ENCODE measurements at regions of chr16 and their contacts with region 1.

Region 1: GRCh38 chr16:48687421-48688038 is 77.5 kb upstream of the N4BP1 start:
- DNase-seq: peak in 1 of 2 donors; percentile 52
- ATAC-seq: peak; percentile 57
- H3K4me3 ChIP-seq: no peak overlapping the region
- H3K27ac ChIP-seq: no peak overlapping the region
- H3K4me1 ChIP-seq: no peaks in the 10 kb centered on the region
- H3K27me3 ChIP-seq: no peaks in the 10 kb centered on the region

Region 2: GRCh38 chr16:48583075-48584065 is 104.2 kb before region 1 on chr16:
- intact Hi-C with region 1: no loop called
- DNase-seq: no peak
- ATAC-seq: no peak
- H3K4me3 ChIP-seq: no peak overlapping the region
- H3K27ac ChIP-seq: no peak overlapping the region
- H3K4me1 ChIP-seq: peaks cover 0 to 2% of the 10 kb centered on the region in 2 donors
- H3K27me3 ChIP-seq: no peaks in the 10 kb centered on the region

Region 3: DNA sequence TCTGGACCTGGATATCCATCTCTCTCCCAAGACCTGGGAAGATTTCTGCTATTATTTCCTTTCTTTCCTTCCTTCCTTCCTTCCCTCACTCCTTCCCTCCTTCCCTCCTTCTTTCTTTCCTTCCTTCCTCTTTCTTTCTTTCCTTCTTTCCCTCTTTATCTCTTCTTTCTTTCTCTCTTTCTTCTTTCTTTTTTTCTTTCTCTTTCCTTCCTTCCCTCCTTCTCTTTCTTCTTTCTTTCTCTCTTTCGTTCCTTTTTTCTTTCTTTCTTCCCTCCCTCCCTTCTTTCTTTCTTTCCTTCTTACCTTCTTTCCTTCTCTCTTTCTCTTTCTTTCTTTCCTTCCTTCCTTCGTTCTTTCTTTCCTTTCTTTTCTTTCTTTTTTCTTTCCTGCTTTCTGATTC is 39.7 kb before region 1 on chr16:
- intact Hi-C with region 1: no loop called
- DNase-seq: no peak
- ATAC-seq: no peak
- H3K4me3 ChIP-seq: no peak overlapping the region
- H3K27ac ChIP-seq: no peak overlapping the region
- H3K4me1 ChIP-seq: no peaks in the 10 kb centered on the region
- H3K27me3 ChIP-seq: no peaks in the 10 kb centered on the region

Region 4: DNA sequence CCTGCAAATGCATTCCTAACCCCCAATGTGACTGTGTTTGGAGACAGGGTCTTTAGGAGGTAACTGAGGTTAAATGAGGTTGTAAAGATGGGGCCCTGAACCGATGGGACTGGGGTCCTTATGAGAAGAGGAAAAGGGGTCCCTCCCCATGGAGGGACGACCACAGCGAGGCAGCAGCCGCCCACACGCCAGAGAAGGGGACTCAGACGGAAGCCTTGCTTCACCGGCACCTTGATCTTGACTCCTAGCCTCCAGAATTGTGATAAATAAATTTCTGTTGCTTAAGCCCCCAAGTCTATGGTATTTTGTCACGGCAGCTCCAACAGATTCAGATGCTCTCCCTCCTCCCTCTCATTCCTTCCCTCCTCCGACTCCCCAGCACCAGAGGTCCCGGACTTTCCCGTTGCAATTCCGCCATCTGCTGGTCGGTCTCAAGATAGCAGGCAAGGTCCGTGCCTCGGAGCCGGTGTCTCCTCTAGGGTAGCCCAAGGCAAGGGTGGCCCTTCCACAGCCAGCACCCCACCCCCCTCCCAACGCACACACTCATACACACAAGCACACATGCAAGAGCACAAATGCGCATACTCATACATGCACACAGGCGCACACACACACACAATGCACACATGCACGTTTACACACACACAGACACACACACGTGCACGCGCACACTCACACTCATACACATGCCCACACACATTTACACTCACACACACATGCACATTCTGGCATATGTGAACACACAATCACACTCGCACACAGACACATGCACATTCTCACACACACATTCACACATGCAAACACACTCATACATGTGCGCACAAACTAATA is 663.0 kb after region 1 on chr16:
- intact Hi-C with region 1: loop called (anchors 5 kb)
- DNase-seq: peak; percentile 53 to 87
- ATAC-seq: peak; percentile 65
- H3K4me3 ChIP-seq: no peak overlapping the region
- H3K27ac ChIP-seq: no peak overlapping the region
- H3K4me1 ChIP-seq: no peaks in the 10 kb centered on the region
- H3K27me3 ChIP-seq: no peaks in the 10 kb centered on the region

Measured in aorta (tissue), 5 donors.